HCT116 (cell line): ENCODE measurements at regions of chr2 and their contacts with region 1.

Region 1: DNA sequence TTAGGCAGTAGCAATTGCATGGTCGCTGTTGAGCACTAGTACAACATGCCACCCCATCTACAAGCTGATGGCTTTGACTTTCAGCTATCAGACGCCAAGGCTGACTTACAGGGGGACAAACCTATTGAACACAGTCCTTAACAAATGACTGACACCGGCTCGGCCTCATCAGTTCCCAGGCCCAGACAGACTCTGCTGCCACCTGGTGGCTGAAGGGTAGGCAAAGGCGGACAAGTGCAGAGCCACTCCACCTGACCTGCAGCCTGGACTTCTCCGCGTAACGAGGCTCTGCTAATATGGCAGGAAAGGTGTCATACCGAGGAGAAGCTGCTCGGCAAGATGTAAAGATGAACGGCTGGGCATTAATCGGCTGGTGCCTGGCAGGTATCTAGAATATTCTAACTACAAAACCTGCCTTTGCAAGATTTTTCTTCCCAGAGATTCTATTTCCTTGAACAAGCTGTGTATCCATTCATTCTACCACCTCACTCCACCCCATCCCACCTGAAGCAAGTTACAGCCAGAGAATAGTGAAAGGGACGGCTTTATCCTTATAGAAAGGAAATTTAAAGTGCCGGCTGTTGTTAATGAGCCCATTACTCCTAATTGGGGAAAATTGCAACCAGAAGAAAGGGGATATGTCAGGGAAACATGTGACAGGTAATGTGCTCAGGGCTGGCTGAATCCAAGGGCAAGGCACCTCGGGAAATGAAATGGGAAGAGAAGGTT is 67.4 kb downstream of the STEAP3 start:
- DNase-seq: peak; percentile 69
- ATAC-seq: peak; percentile 100
- H3K4me3 ChIP-seq: no peak overlapping the region
- H3K27ac ChIP-seq: no peak overlapping the region
- H3K4me1 ChIP-seq: peaks cover 0 to 9% of the 10 kb centered on the region in 2 experiments; a peak in 1 of 4 replicates
- H3K27me3 ChIP-seq: no peaks in the 10 kb centered on the region
- CTCF ChIP-seq: peak; percentile 91 to 97 (median 92)
- POLR2A ChIP-seq: no peak
- RAD21 ChIP-seq: peak; percentile 98

Region 2: GRCh38 chr2:118882709-118883210 is 408.3 kb before region 1 on chr2:
- CTCF ChIA-PET with region 1: interaction called, 12 read pairs
- POLR2A ChIA-PET with region 1: no interaction called
- RAD21 ChIA-PET with region 1: interaction called in 1 of 2 experiments, 3 read pairs
- intact Hi-C with region 1: loop called (anchors 1 kb)
- DNase-seq: peak; percentile 57
- ATAC-seq: peak; percentile 78
- H3K4me3 ChIP-seq: peak overlapping the region; percentile 29 to 49
- H3K27ac ChIP-seq: no peak overlapping the region
- H3K4me1 ChIP-seq: peaks cover 0 to 4% of the 10 kb centered on the region in 2 experiments; a peak in 2 of 4 replicates
- H3K27me3 ChIP-seq: peaks cover 12% of the 10 kb centered on the region; the same call in 1 of the 2 replicates
- CTCF ChIP-seq: peak; percentile 84 to 99 (median 97)
- POLR2A ChIP-seq: no peak
- RAD21 ChIP-seq: peak; percentile 91

Region 3: GRCh38 chr2:119011162-119011909 is 279.7 kb before region 1 on chr2:
- CTCF ChIA-PET with region 1: interaction called, 8 read pairs
- POLR2A ChIA-PET with region 1: no interaction called
- RAD21 ChIA-PET with region 1: no interaction called
- intact Hi-C with region 1: loop called (anchors 1 kb)
- DNase-seq: peak; percentile 16
- ATAC-seq: peak; percentile 95
- H3K4me3 ChIP-seq: peak overlapping the region in 1 of 2 experiments; percentile 10; a peak in 1 of 4 replicates
- H3K27ac ChIP-seq: no peak overlapping the region
- H3K4me1 ChIP-seq: no peaks in the 10 kb centered on the region; a peak in 1 of 4 replicates
- H3K27me3 ChIP-seq: peaks cover 18% of the 10 kb centered on the region; the same call in 1 of the 2 replicates
- CTCF ChIP-seq: peak; percentile 59 to 74 (median 64)
- POLR2A ChIP-seq: no peak
- RAD21 ChIP-seq: peak; percentile 83

Region 4: DNA sequence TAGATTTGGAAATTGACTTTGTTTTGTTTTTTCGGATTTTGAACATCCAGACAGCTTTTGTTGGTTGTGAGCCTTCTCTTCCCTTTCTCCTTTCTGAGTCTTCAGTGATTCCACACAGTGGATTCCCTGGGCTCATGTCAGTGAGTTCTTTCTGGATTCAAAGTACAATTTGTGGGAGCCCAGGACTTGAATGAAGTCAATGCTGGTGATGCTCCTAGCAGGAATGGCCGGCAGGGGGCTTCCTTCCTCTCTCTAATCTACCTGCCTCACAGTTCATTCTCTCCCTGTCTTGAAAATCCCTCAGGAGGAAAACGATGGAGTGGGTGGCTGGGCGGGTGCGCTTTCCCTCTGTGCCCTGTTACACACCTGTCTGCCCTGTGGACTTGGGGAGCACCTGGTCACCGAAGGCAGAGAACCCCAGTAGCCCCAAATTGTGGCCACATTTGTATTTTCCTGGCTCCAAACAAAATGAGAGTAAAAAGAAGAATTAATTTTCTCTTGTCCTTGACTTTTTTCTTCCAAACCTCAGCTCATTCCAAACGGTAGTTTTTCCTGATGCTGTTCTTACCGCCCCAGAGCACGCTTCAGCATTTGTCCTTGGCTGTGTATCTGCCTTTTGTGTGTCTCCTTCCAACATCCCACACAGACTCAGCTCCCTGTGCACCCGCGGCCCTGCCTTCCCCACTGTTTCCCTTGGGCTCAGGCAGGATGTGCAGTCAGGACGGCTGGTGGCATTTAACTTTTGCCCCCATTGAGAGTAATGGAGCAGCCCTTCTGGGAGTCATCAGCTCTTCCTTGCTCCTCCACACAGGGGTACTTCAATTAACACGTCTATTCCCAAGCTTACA is 262.5 kb before region 1 on chr2:
- CTCF ChIA-PET with region 1: interaction called, 4 read pairs
- POLR2A ChIA-PET with region 1: no interaction called
- RAD21 ChIA-PET with region 1: no interaction called
- intact Hi-C with region 1: loop called (anchors 1 kb)
- DNase-seq: peak; percentile 48
- ATAC-seq: peak; percentile 90
- H3K4me3 ChIP-seq: no peak overlapping the region
- H3K27ac ChIP-seq: no peak overlapping the region
- H3K4me1 ChIP-seq: no peaks in the 10 kb centered on the region
- H3K27me3 ChIP-seq: peaks cover 9% of the 10 kb centered on the region; the same call in 1 of the 2 replicates
- CTCF ChIP-seq: peak; percentile 63 to 78 (median 69); a peak in 5 of 6 replicates
- POLR2A ChIP-seq: no peak
- RAD21 ChIP-seq: peak; percentile 76

Region 5: GRCh38 chr2:119218478-119219064 is 72.5 kb before region 1 on chr2:
- CTCF ChIA-PET with region 1: interaction called, 12 read pairs
- POLR2A ChIA-PET with region 1: no interaction called
- RAD21 ChIA-PET with region 1: interaction called in 1 of 2 experiments, 4 read pairs
- intact Hi-C with region 1: loop called (anchors 1 kb)
- DNase-seq: peak; percentile 40
- ATAC-seq: peak; percentile 35
- H3K4me3 ChIP-seq: no peak overlapping the region
- H3K27ac ChIP-seq: peak overlapping the region; percentile 14; the same call in 1 of the 2 replicates
- H3K4me1 ChIP-seq: peaks cover 22 to 30% of the 10 kb centered on the region in 2 experiments; a peak in 3 of 4 replicates
- H3K27me3 ChIP-seq: no peaks in the 10 kb centered on the region
- CTCF ChIP-seq: peak in 2 of 3 experiments; percentile 53 to 77; a peak in 5 of 6 replicates
- POLR2A ChIP-seq: no peak
- RAD21 ChIP-seq: peak; percentile 86

Region 6: DNA sequence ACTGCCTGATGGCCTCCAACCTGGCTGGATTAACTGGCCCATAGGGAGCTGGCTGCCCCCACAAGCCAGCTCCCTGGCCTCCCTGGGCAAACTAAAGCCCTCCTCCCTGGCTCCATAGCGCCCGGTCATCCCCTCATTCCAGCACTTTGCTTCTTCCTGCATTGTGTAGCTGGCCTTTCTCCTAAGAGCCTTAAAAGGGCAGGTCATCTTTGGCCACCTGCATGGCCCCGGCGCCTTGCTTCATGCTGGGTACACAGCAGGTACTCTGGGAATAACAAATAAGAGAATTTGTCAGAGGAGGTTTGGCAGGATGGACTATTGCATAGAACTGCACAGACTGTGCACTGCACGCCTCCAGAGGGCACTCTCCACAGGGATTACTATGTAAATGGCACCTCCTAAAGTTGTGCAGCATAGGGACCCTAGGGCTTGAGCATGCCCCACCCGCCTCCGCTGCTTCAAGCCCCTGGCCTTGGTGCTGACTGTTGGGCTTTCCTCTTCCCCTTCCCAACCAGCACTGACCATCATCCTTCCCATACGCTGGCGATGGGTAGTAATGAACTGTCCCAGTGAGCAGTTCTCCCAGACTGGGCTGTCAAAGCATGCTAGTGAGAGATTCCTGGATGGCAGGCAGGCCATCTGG is 56.5 kb before region 1 on chr2:
- CTCF ChIA-PET with region 1: interaction called, 6 read pairs
- POLR2A ChIA-PET with region 1: no interaction called
- RAD21 ChIA-PET with region 1: interaction called, 3 to 6 read pairs
- intact Hi-C with region 1: loop called (anchors 1 kb)
- DNase-seq: no peak
- ATAC-seq: peak; percentile 92
- H3K4me3 ChIP-seq: no peak overlapping the region
- H3K27ac ChIP-seq: no peak overlapping the region
- H3K4me1 ChIP-seq: peaks cover 3 to 13% of the 10 kb centered on the region in 2 experiments
- H3K27me3 ChIP-seq: no peaks in the 10 kb centered on the region
- CTCF ChIP-seq: peak; percentile 70 to 77 (median 73)
- POLR2A ChIP-seq: no peak
- RAD21 ChIP-seq: peak; percentile 84

Region 7: GRCh38 chr2:119311356-119311755 is 20.3 kb after region 1 on chr2:
- CTCF ChIA-PET with region 1: no interaction called
- POLR2A ChIA-PET with region 1: no interaction called
- RAD21 ChIA-PET with region 1: no interaction called
- intact Hi-C with region 1: no loop called
- DNase-seq: no peak
- ATAC-seq: no peak
- H3K4me3 ChIP-seq: no peak overlapping the region
- H3K27ac ChIP-seq: no peak overlapping the region
- H3K4me1 ChIP-seq: no peaks in the 10 kb centered on the region
- H3K27me3 ChIP-seq: no peaks in the 10 kb centered on the region
- CTCF ChIP-seq: no peak
- POLR2A ChIP-seq: no peak
- RAD21 ChIP-seq: no peak

Region 8: DNA sequence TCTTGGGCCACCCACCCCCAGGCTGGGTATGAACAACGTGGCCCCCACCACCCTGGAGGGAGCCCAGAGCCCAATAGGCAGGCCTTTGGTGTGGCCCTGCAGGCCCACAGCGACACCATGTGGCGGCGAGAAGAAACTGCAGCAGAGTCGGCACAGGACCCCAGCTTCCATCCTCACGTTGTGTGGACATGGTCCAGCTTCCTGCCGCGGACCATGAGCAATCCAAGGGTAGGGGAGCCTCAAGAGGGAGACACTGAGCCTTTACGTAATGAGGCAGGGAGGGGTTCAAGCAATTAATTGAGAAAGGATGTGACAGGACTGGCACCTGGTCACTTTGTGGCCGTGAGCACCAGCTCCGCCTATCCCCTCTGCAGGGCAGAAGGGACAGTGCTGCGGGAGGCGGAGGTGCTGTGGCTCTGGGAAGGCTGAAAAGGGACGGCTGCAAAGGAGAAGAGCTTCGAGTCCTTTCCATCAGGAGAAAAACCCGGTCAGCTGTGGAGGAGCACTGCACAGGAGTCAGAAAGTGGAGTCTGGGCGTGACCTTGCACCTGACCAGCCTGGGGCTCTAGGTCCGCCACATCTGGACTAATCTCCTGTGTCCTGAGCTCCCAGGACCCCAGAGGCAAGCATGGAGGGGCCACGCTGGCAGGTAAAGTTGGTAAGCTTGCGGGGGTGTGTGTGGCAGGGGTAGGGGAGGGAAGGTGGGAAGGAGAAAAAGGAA is 185.4 kb after region 1 on chr2:
- CTCF ChIA-PET with region 1: interaction called, 4 read pairs
- POLR2A ChIA-PET with region 1: no interaction called
- RAD21 ChIA-PET with region 1: no interaction called
- intact Hi-C with region 1: loop called (anchors 10 kb)
- DNase-seq: peak; percentile 78
- ATAC-seq: peak; percentile 95
- H3K4me3 ChIP-seq: peak overlapping the region in 1 of 2 experiments; percentile 29; a peak in 2 of 4 replicates
- H3K27ac ChIP-seq: no peak overlapping the region
- H3K4me1 ChIP-seq: peaks cover 0 to 7% of the 10 kb centered on the region in 2 experiments; a peak in 2 of 4 replicates
- H3K27me3 ChIP-seq: no peaks in the 10 kb centered on the region
- CTCF ChIP-seq: peak; percentile 97 to 98 (median 98)
- POLR2A ChIP-seq: no peak
- RAD21 ChIP-seq: peak; percentile 98

Region 9: DNA sequence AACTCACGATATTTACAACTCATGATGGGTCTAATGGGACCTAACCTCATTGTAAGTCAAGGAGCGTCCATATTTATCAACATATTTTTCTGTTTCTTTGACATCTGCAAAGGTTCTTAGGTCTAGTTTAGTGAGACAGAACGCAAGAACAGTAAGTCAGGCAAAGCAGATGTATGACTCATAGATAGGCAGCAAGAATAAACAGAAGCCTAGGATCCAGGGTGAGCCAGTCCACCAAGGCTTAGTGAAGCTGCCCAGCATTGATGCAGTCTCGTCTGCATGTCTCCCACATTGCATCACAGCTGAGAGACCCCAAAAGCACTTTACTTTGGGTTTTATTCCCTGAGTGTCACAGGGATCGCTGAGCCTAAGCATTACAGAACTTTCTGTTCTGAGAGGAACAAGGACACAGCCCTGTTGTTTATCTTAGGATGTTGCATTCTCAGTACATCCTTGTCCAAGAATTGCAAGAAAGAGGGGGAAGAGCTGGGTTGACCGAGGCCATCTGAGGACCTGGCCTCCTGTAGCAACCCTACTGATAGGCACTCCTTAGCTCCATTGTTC is 358.4 kb after region 1 on chr2:
- CTCF ChIA-PET with region 1: no interaction called
- POLR2A ChIA-PET with region 1: no interaction called
- RAD21 ChIA-PET with region 1: no interaction called
- intact Hi-C with region 1: no loop called
- DNase-seq: no peak
- ATAC-seq: no peak
- H3K4me3 ChIP-seq: no peak overlapping the region
- H3K27ac ChIP-seq: no peak overlapping the region
- H3K4me1 ChIP-seq: no peaks in the 10 kb centered on the region
- H3K27me3 ChIP-seq: no peaks in the 10 kb centered on the region
- CTCF ChIP-seq: no peak
- POLR2A ChIP-seq: no peak
- RAD21 ChIP-seq: no peak